ENCODE measurements at regions of chr1 and their contacts with region 1.

Region 1: GRCh38 chr1:89274411-89274857 is 1.8 kb upstream of the GBP5 start:
- DNase-seq: peak; percentile 35
- H3K4me3 Mint-ChIP-seq: peak overlapping the region; percentile 91
- H3K27ac Mint-ChIP-seq: peak overlapping the region; percentile 98
- H3K4me1 Mint-ChIP-seq: peaks cover 57% of the 10 kb centered on the region
- H3K27me3 Mint-ChIP-seq: no peaks in the 10 kb centered on the region

Region 2: DNA sequence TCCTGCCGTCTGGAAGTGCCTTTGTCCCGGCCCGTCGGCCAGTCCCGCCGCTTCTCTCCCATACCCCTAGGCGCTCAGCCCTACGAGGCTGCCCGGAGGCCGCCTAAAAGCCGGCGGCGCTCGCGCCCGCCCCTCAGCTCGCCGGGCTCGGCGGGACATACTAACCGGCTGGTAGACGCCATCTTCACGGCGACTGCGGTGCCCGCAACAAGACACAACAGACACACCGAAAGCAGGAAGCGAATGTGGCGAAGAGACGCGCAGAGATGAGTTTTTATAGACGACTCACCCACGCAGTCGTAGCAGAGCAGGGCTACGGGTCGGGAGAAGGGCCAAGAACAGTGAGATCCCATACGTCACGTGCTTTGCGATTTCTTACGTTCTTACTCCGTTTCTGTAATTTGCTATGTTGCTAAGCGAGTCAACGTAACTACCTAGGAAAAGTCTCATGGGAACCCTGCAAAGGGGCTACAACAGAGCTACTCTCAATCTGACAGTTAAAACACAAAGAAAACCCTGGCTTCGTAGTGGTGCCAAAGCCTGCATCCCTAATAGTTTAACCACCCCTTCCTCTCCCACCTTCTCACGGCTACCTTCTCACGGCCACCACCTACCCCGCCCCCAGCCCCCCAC is 383.0 kb before region 1 on chr1 and contains the start of gene GTF2B:
- CTCF ChIA-PET with region 1: no interaction called
- intact Hi-C with region 1: loop called (anchors 2 kb)
- DNase-seq: peak; percentile 97
- H3K4me3 Mint-ChIP-seq: peak within 1 kb of the TSS; percentile 82
- H3K27ac Mint-ChIP-seq: peak within 1 kb of the TSS; percentile 96
- H3K4me1 Mint-ChIP-seq: peaks cover 36% of the 10 kb centered on the region
- H3K27me3 Mint-ChIP-seq: no peaks in the 10 kb centered on the region
- total RNA-seq, gene GTF2B: 35.2 to 36.1 TPM

Region 3: GRCh38 chr1:88998716-88999115 is 275.7 kb before region 1 on chr1:
- CTCF ChIA-PET with region 1: interaction called, 38 read pairs
- intact Hi-C with region 1: loop called (anchors 1 kb)
- DNase-seq: peak; percentile 33
- H3K4me3 Mint-ChIP-seq: no peak overlapping the region
- H3K27ac Mint-ChIP-seq: no peak overlapping the region
- H3K4me1 Mint-ChIP-seq: peaks cover 27% of the 10 kb centered on the region
- H3K27me3 Mint-ChIP-seq: peaks cover 4% of the 10 kb centered on the region

Region 4: GRCh38 chr1:89085781-89086180 is 188.7 kb before region 1 on chr1:
- CTCF ChIA-PET with region 1: interaction called, 25 read pairs
- intact Hi-C with region 1: loop called (anchors 1 kb)
- DNase-seq: peak; percentile 70
- H3K4me3 Mint-ChIP-seq: no peak overlapping the region
- H3K27ac Mint-ChIP-seq: no peak overlapping the region
- H3K4me1 Mint-ChIP-seq: no peaks in the 10 kb centered on the region
- H3K27me3 Mint-ChIP-seq: no peaks in the 10 kb centered on the region

Region 5: DNA sequence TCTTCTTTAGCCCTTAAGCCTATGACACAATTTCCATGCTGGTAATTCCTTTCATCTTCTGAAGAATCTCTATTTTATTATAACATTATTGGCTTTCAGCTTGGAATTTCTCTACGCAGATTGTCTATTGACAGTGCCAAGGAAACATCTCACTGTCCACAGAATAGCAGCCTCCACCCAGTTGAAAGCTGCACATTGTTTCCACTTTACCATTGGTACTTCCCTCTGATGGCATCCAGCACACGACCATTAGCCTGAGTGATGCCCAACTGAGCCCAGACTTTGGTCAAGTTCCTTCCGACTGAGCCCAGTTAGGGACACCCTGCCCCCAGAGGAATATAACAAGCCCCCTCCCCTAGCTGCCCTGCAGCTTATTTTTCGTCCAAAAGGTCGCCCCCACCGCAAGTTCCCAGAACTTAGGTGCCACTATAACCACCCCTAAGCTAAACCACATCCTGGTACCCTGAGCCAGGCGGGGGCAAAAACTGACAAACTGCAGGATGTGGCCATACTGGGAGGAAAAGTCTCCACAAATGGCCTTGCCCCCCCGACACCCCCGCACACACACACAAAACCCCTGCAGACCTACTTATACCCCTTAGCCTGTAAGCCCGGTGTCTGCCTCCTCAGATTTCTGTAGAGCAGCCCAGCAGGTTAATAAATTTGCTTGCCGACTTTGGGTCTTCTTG is 15.0 kb before region 1 on chr1:
- CTCF ChIA-PET with region 1: interaction called, 5 read pairs
- intact Hi-C with region 1: loop called (anchors 2 kb)
- DNase-seq: peak; percentile 75
- H3K4me3 Mint-ChIP-seq: peak overlapping the region; percentile 15
- H3K27ac Mint-ChIP-seq: peak overlapping the region; percentile 86
- H3K4me1 Mint-ChIP-seq: peaks cover 68% of the 10 kb centered on the region
- H3K27me3 Mint-ChIP-seq: no peaks in the 10 kb centered on the region

Region 6: DNA sequence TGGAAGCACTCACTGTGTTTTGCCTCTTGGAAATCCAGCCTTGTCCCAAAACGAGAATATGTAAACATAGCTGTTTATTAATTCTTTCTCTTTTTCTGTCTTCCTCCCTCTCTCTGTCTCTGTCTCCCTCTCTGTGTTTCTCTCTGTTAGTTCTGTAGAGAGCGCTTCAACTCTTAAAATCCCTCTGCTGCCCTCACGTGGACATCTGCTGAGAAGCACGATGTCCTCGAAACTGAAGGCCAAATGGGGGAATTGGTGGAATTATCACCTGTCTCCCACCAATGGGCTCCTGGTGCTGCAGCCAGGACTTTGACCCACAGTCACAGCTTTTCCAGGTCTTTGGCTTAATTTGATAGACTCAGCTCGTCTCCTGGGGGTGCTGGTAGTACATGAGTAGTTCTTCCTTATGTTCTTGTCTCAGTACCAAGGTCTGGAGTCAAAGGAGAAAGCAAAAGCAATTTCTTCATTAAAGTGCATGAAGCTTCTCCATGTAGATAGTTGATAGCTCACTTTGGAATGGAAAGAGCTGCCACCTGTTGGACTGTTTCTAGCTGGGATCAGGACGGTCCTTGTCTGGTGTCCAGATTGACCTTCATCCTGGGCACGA is 84.0 kb after region 1 on chr1:
- CTCF ChIA-PET with region 1: interaction called, 73 read pairs
- intact Hi-C with region 1: loop called (anchors 1 kb)
- DNase-seq: peak; percentile 91
- H3K4me3 Mint-ChIP-seq: peak overlapping the region; percentile 33
- H3K27ac Mint-ChIP-seq: peak overlapping the region; percentile 65
- H3K4me1 Mint-ChIP-seq: peaks cover 33% of the 10 kb centered on the region
- H3K27me3 Mint-ChIP-seq: no peaks in the 10 kb centered on the region

Region 7: DNA sequence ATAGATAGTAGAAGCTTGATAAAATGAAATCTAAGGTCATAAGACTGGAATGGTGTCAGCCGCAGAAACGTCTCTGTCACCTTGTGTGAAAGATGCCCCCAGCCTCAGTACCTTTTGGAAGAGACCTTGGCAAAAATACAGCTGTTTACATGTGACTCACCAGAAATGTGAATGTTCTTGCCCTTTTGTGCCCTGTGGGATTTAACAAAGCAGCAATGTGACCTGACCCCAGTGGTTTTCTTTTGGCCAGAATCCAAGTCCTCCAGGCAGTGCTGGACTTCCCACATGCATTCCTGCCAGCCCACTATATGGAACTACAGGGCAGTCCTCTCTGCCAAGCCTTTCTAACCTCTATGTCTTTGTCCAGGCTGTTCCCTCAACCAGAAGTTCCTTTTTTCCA is 331.3 kb after region 1 on chr1:
- CTCF ChIA-PET with region 1: no interaction called
- intact Hi-C with region 1: loop called (anchors 5 kb)
- DNase-seq: no peak
- H3K4me3 Mint-ChIP-seq: no peak overlapping the region
- H3K27ac Mint-ChIP-seq: no peak overlapping the region
- H3K4me1 Mint-ChIP-seq: peaks cover 95% of the 10 kb centered on the region
- H3K27me3 Mint-ChIP-seq: no peaks in the 10 kb centered on the region